Mammary epithelial cell (primary cell): ENCODE measurements at regions of chr7 and their contacts with region 1.

Region 1: GRCh38 chr7:137446025-137446424 is 102.5 kb upstream of the PTN start:
- DNase-seq: no peak
- H3K4me3 ChIP-seq: no peak overlapping the region
- H3K27ac ChIP-seq: no peak overlapping the region
- H3K4me1 ChIP-seq: peaks cover 5% of the 10 kb centered on the region
- H3K27me3 ChIP-seq: peaks cover 2% of the 10 kb centered on the region
- CTCF ChIP-seq: no peak

Region 2: GRCh38 chr7:137343281-137343841 is 102.7 kb before region 1 on chr7 and contains the start of gene PTN:
- CTCF ChIA-PET with region 1: no interaction called
- dilution Hi-C with region 1: no loop called
- in situ Hi-C with region 1: no loop called
- intact Hi-C with region 1: no loop called
- DNase-seq: peak; percentile 70
- H3K4me3 ChIP-seq: peak within 1 kb of the TSS; percentile 24 to 50 (median 31)
- H3K27ac ChIP-seq: no peak within 1 kb of the TSS
- H3K4me1 ChIP-seq: peaks cover 13% of the 10 kb centered on the region
- H3K27me3 ChIP-seq: no peaks in the 10 kb centered on the region
- CTCF ChIP-seq: peak in 1 of 2 donors; percentile 1
- total RNA-seq, gene PTN: 3.2 to 4.3 TPM

Region 3: GRCh38 chr7:137513091-137513490 is 67.1 kb after region 1 on chr7:
- CTCF ChIA-PET with region 1: no interaction called
- dilution Hi-C with region 1: loop called (anchors 5 kb)
- in situ Hi-C with region 1: no loop called
- intact Hi-C with region 1: no loop called
- DNase-seq: no peak
- H3K4me3 ChIP-seq: no peak overlapping the region
- H3K27ac ChIP-seq: no peak overlapping the region
- H3K4me1 ChIP-seq: peaks cover 14% of the 10 kb centered on the region
- H3K27me3 ChIP-seq: no peaks in the 10 kb centered on the region
- CTCF ChIP-seq: no peak

Region 4: DNA sequence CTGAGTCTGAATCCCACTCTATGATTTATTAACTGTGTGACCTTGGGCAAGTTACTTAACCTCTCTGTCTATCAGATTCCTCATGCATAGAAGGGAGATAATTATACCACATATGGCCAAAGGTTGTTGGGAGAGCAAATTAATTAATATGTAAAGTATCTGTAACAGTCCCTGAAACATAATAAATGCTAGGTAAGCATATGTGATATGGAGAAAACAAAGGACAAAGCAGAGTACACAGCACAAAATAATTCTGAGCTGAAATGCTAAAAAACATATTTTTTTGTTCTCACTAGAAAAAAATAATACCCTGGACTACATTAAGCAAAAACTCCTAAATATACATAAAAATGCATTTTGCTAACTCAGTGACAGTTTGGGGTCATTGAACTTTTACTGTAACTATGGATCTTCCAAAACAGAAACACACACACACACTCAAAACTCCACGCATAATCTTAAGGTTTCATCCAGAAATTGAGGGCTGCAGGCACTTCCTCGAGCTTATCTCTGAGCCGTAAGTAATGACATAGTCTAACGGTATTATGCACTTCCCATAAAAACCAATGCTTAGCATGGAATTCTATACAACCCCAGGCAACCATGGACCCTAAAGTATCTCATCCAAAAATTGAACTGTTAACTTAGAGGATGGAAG is 99.2 kb after region 1 on chr7:
- CTCF ChIA-PET with region 1: no interaction called
- dilution Hi-C with region 1: no loop called
- in situ Hi-C with region 1: no loop called
- intact Hi-C with region 1: no loop called
- DNase-seq: no peak
- H3K4me3 ChIP-seq: no peak overlapping the region
- H3K27ac ChIP-seq: no peak overlapping the region
- H3K4me1 ChIP-seq: no peaks in the 10 kb centered on the region
- H3K27me3 ChIP-seq: no peaks in the 10 kb centered on the region
- CTCF ChIP-seq: no peak

Region 5: DNA sequence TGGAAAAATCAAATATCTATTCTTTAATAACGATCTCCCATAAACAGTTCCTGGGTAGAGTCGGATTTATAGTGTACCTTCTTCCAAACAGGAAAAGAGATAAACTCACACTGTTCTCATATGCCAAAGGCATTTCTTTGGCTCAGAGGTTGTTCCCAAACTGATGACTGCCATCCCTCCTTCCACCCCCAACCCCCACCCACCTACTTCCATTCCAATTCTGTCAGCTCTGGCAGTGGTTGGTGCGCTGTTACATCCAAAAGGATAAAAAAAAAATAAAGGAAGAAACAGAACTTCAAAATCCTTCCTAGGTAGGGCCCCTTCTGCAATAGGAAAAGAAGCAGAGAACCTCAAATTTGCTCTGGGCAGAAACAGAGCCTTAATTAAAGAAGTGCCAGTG is 296.0 kb after region 1 on chr7:
- CTCF ChIA-PET with region 1: no interaction called
- dilution Hi-C with region 1: no loop called
- in situ Hi-C with region 1: no loop called
- intact Hi-C with region 1: no loop called
- DNase-seq: no peak
- H3K4me3 ChIP-seq: no peak overlapping the region
- H3K27ac ChIP-seq: no peak overlapping the region
- H3K4me1 ChIP-seq: no peaks in the 10 kb centered on the region
- H3K27me3 ChIP-seq: peaks cover 2% of the 10 kb centered on the region
- CTCF ChIP-seq: no peak